ENCODE measurements at regions of chr6 and their contacts with region 1.

Region 1: GRCh38 chr6:119034827-119035458 is 43.5 kb downstream of the FAM184A start:
- DNase-seq: peak; percentile 42
- H3K4me3 ChIP-seq: no peak overlapping the region
- H3K27ac ChIP-seq: no peak overlapping the region
- H3K4me1 ChIP-seq: no peaks in the 10 kb centered on the region
- H3K27me3 ChIP-seq: no peaks in the 10 kb centered on the region
- CTCF ChIP-seq: no peak
- POLR2A ChIP-seq: no peak

Region 2: GRCh38 chr6:118968416-118968815 is 66.5 kb before region 1 on chr6:
- CTCF ChIA-PET with region 1: interaction called, 3 read pairs
- POLR2A ChIA-PET with region 1: no interaction called
- dilution Hi-C with region 1: no loop called
- intact Hi-C with region 1: loop called (anchors 5 kb)
- DNase-seq: peak; percentile 44
- H3K4me3 ChIP-seq: no peak overlapping the region
- H3K27ac ChIP-seq: no peak overlapping the region
- H3K4me1 ChIP-seq: no peaks in the 10 kb centered on the region
- H3K27me3 ChIP-seq: no peaks in the 10 kb centered on the region
- CTCF ChIP-seq: peak; percentile 7 to 28
- POLR2A ChIP-seq: no peak

Measured in endothelial cell of umbilical vein (primary cell).